ENCODE measurements at regions of chr5 and their contacts with region 1.

Region 1: GRCh38 chr5:171387345-171387969 is at the start of gene NPM1:
- DNase-seq: peak; percentile 98
- H3K4me3 Mint-ChIP-seq: peak within 1 kb of the TSS; percentile 98
- H3K27ac Mint-ChIP-seq: peak within 1 kb of the TSS; percentile 98
- H3K4me1 Mint-ChIP-seq: peaks cover 37% of the 10 kb centered on the region
- H3K27me3 Mint-ChIP-seq: no peaks in the 10 kb centered on the region
- total RNA-seq, gene NPM1: 3,194 to 3,467 TPM

Region 2: DNA sequence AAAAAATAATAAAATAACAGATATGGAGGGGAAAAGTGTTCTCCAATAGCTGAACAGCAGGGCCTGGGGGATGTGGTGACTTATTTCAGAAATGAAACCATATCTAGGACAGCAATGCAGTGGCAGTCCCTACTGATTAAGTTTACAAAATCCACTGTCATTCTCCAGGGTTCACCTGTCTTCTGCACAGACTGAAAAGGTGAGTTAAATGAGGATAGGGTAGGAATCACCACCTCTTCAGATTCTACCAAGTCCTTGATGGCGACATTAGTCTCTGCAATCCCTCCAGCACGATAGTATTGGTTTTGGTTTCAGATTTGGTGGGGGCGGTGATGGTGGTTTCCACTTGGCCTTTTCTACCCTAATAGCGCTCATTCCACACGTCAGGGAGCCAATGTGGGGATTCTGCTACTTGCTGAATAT is 32.1 kb before region 1 on chr5:
- CTCF ChIA-PET with region 1: no interaction called
- intact Hi-C with region 1: loop called (anchors 2 kb)
- DNase-seq: peak; percentile 50
- H3K4me3 Mint-ChIP-seq: no peak overlapping the region
- H3K27ac Mint-ChIP-seq: no peak overlapping the region
- H3K4me1 Mint-ChIP-seq: peaks cover 3% of the 10 kb centered on the region
- H3K27me3 Mint-ChIP-seq: peaks cover 1% of the 10 kb centered on the region

Region 3: DNA sequence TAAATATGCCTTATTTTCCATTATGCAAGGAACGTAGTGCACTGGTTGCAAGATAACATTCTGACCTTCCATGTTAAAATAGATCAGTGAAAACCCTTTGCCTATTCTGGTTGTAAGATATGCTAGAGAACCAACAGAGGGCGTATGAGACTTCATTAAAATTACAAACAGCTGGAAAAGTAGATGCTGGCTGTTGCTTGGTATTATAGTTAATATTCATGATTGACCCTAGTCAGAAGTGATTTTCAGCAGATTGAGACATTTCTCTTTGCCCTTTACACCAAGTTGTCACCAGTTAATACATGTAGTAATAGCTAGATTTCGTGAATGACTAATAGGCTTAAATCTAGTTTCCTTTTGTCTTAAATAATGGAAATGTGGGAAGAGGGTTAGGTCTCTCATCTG is 18.1 kb after region 1 on chr5:
- CTCF ChIA-PET with region 1: interaction called, 9 read pairs
- intact Hi-C with region 1: loop called (anchors 2 kb)
- DNase-seq: no peak
- H3K4me3 Mint-ChIP-seq: no peak overlapping the region
- H3K27ac Mint-ChIP-seq: no peak overlapping the region
- H3K4me1 Mint-ChIP-seq: peaks cover 50% of the 10 kb centered on the region
- H3K27me3 Mint-ChIP-seq: no peaks in the 10 kb centered on the region

Region 4: DNA sequence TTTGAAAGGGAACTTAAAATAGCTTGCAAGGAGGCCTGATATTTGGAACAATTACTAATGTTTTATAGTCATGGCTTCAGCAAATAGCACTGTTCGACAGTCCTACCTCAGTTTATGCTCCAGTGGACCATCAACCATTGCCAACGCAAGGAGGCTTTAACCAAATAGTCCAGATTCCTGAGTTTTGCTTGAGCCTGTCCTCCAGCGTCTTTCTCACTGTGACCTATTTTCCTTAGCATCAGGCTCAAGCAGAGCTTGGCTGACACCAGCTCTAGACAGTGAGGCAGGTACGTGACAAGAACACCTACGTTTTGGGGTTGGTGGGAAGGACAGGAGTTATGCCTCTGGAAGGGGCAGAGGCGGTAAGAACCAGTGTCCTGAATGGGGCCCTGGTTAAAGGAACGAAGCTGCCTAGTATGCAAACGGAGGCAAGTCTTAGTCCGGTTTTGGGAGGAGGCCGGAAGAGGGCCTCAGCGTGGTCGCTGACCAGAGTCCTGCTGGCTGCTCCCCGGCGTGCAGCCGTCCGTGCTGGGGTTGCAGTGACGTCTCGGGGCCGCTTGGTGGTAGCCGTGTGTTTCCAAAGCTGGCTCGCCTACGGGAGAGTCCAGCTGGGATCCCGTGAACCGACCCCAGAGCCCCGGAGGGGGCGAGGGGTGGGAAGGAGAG is 31.0 kb after region 1 on chr5:
- CTCF ChIA-PET with region 1: interaction called, 6 read pairs
- intact Hi-C with region 1: loop called (anchors 1 kb)
- DNase-seq: peak; percentile 71
- H3K4me3 Mint-ChIP-seq: peak overlapping the region; percentile 53
- H3K27ac Mint-ChIP-seq: no peak overlapping the region
- H3K4me1 Mint-ChIP-seq: peaks cover 13% of the 10 kb centered on the region
- H3K27me3 Mint-ChIP-seq: peaks cover 25% of the 10 kb centered on the region

Region 5: GRCh38 chr5:171984748-171985419 is 597.4 kb after region 1 on chr5:
- CTCF ChIA-PET with region 1: no interaction called
- intact Hi-C with region 1: loop called (anchors 5 kb)
- DNase-seq: peak; percentile 63
- H3K4me3 Mint-ChIP-seq: no peak overlapping the region
- H3K27ac Mint-ChIP-seq: peak overlapping the region; percentile 50
- H3K4me1 Mint-ChIP-seq: peaks cover 55% of the 10 kb centered on the region
- H3K27me3 Mint-ChIP-seq: no peaks in the 10 kb centered on the region

Region 6: DNA sequence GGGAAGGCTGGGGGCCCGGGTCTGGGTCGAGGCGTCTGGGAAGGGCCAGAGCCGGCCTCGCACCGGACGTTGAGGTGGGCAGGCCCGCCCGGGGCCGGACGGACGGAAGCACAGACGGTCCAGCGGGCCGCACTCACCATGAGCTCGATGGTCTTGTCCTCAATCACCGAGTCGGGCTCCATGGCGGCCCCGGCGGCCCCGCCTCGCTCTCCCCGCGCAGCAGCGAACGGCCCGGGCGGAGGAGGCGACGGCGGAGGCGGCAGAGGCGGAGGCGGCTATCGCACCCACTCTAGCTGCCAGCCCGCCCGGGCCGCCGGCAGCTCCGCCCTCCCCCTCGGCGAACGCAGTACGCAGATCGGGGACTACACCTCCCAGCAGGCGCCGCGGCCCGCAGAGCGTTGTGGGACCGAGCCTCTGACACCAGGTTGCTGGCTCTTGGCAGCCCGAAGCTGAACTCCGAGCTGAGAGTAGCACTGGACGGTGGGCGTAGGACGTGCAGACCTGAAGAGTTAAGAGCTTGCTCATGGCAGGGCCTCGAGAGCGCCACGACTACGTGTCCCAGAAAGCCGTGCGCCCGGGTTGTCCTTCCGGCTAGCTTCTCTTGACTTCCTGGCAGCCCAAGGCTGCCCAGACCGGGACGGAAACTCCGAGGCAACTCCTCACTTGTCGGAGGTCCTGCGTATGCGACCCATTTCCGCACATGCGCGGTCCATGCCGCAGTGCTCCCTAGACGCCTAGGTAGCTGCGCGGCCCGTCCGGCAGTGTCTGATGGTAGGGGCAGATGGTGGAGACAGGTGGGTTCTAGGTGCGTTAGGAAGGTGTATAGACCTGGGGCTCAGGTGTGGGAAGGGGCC is 619.1 kb after region 1 on chr5 and contains the start of gene FBXW11:
- CTCF ChIA-PET with region 1: no interaction called
- intact Hi-C with region 1: loop called (anchors 1 kb)
- DNase-seq: peak; percentile 96
- H3K4me3 Mint-ChIP-seq: peak within 1 kb of the TSS; percentile 96
- H3K27ac Mint-ChIP-seq: peak within 1 kb of the TSS; percentile 99
- H3K4me1 Mint-ChIP-seq: peaks cover 46% of the 10 kb centered on the region
- H3K27me3 Mint-ChIP-seq: no peaks in the 10 kb centered on the region
- total RNA-seq, gene FBXW11: 32.8 to 35.5 TPM

Region 7: DNA sequence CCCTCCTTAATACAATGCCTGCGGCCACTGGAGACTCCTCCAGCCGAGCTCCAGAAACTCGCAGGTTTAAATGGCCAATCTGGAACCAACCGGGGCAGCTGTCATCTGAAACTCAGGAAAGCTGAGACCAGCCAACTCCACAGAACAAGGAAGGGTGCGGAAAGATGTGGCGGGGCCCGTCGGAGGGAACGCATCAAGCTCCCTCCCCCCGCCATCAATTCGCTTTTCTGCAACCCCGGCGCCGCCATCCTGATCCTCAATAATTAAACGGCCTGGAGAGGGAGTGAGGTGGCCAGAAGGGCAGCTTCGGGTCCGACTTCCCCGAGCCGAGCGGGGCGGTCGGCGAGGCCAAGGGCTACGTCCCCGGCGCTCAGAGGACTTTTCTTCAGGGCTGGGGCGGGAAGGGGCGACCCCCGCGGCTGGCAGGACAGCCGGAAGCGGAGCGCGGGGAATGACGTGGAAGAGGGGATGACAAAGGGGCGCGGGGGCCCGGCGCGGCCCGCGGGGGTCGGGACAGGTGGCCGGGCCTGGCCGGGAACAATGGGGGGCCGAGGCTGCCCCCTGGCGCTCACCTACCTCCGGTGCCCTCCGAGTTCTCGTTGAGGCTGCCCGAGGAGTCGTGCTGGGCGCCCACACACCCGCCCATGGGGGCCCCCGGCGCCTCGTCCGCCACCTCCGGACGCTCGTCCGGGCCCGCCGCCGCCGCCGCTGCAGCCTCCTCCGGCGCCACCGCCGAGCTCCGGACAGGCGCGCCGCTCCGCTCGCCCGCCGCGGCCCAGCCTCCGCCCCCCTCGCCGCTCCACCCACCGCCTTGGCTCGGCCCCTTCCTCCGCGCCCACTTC is 895.8 kb after region 1 on chr5 and contains the start of gene UBTD2:
- CTCF ChIA-PET with region 1: no interaction called
- intact Hi-C with region 1: loop called (anchors 5 kb)
- DNase-seq: peak; percentile 70
- H3K4me3 Mint-ChIP-seq: peak within 1 kb of the TSS; percentile 81
- H3K27ac Mint-ChIP-seq: no peak within 1 kb of the TSS
- H3K4me1 Mint-ChIP-seq: peaks cover 19% of the 10 kb centered on the region
- H3K27me3 Mint-ChIP-seq: no peaks in the 10 kb centered on the region
- total RNA-seq, gene UBTD2: 2.3 to 2.6 TPM